A549 (cell line): ENCODE measurements at regions of chr14 and their contacts with region 1.

Region 1: DNA sequence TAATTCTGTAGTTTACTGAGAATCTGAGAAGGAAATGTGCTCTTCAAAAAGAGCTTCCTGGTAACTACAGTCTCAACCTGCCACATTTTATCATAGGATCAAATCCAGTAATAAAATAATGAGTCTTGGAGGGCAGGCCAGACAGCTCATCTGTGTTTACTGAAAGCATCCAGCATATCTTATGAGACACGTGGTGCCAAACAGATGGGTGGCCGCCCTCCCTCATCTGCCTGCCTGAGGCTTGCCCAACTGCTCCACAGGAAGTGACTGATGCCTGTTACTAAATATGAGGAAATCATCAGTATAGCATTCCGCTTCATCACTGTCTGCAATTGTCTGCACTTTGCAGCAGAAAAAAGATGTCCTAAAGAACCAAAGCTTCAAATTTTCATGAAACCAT is 13.5 kb downstream of the DHRS7 start:
- DNase-seq: peak; percentile 51 to 85
- ATAC-seq: peak; percentile 97 to 100
- H3K4me3 ChIP-seq: no peak overlapping the region
- H3K27ac ChIP-seq: peak overlapping the region; percentile 43 to 68; a peak in 5 of 6 replicates
- H3K4me1 ChIP-seq: peaks cover 17% of the 10 kb centered on the region
- CTCF ChIP-seq: no peak
- EP300 ChIP-seq: peak in 1 of 2 experiments; percentile 22; a peak in 1 of 5 replicates
- POLR2A ChIP-seq: no peak
- RAD21 ChIP-seq: no peak

Region 2: DNA sequence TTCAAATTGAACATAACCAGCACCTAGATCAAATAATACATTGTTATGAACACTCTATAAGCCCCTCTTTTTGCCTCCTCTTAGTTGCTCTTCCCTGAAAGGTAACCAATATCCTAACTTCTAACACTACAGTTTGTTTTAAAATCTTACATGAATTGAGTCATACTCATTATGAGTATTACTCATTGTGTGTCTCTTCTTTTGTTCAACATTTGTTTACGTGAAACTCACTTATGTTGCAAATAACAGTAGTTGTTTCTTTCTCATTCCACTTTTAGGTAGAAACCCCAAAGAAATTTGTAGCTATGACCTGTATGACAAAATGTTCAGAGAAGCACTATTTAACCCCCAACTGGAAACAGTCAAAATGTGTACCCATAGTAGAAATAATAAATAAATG is 225.2 kb before region 1 on chr14:
- CTCF ChIA-PET with region 1: no interaction called
- POLR2A ChIA-PET with region 1: no interaction called
- DNase-seq: no peak
- ATAC-seq: no peak
- H3K4me3 ChIP-seq: no peak overlapping the region
- H3K27ac ChIP-seq: no peak overlapping the region
- H3K4me1 ChIP-seq: no peaks in the 10 kb centered on the region
- CTCF ChIP-seq: no peak
- EP300 ChIP-seq: no peak
- POLR2A ChIP-seq: no peak
- RAD21 ChIP-seq: no peak

Region 3: DNA sequence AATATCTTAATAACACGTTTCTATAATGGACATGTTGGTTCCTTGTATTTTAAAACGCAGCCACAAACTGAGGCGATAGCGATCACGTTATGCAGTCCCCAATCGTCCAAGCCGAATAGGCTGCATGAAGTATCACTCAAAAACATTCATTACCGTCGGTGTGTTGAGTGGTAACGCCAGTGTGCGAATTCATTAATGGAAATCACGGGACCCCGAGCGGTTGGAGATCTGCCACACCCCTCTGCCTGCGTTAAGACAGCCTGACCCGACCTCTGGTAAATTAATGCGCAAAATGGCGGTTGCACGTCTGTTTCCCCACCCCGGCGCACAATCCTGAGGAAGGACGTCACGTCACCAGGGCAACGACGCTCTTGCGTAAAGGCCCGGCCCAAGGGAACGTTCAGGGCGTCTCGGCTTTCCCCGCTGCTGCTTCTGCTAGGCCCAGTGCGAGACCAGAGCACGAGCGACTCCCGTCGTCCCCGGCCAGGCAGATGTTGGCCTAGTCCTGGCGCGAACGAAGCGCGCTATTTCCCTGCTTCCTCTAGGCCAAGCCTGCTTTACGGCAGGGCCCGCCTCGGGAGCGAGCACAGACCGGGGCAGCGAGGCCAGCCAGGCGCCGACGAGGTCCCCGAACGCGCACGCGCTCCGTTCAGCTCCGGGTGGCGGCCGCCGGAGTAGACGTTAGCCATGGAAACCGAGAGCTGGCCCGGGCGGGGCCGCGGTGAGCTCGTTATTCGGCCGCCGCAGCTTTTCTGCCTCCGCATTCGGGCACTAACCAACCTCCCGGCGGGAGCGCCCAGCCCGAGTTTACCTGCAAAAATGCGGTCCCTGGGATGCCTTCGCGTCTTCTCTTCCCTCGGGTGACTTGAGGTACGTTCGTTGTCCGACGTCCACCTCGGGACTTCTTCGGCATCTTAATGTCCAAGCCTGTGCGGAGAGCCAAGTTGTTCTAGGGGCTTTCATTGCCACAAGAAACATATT is 59.9 kb before region 1 on chr14 and contains the start of gene PCNX4:
- CTCF ChIA-PET with region 1: interaction called, 7 read pairs
- POLR2A ChIA-PET with region 1: interaction called, 20 read pairs
- DNase-seq: peak; percentile 86 to 99
- ATAC-seq: peak; percentile 96 to 97
- H3K4me3 ChIP-seq: peak within 1 kb of the TSS; percentile 72
- H3K27ac ChIP-seq: peak within 1 kb of the TSS; percentile 92 to 97
- H3K4me1 ChIP-seq: peaks cover 31% of the 10 kb centered on the region
- CTCF ChIP-seq: no peak
- EP300 ChIP-seq: no peak
- POLR2A ChIP-seq: peak; percentile 95
- RAD21 ChIP-seq: no peak
- polyA plus RNA-seq, gene PCNX4: 51.0 and 94.5 TPM in 2 replicates

Region 4: DNA sequence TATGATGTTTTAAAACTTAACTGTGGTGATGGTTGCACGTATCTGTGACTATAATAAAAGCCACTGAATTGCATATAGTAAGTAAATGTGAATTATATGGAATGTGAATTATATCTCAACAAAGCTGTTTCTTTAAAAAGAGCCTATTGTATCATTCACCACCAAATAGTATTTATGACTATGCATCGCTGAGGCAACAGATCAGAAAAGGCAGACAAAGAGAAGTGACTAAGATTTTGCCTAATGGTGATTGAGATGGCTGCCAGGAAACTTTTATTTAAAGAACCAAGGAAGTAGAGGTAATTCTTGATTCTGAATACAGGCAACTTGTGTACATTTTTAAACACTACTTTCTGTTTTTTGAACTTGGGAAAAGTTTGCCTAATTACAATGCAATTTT is 18.2 kb before region 1 on chr14:
- CTCF ChIA-PET with region 1: no interaction called
- POLR2A ChIA-PET with region 1: no interaction called
- DNase-seq: no peak
- ATAC-seq: no peak
- H3K4me3 ChIP-seq: no peak overlapping the region
- H3K27ac ChIP-seq: no peak overlapping the region
- H3K4me1 ChIP-seq: no peaks in the 10 kb centered on the region
- CTCF ChIP-seq: no peak
- EP300 ChIP-seq: no peak
- POLR2A ChIP-seq: no peak
- RAD21 ChIP-seq: no peak

Region 5: GRCh38 chr14:60204104-60204842 is 52.6 kb after region 1 on chr14:
- CTCF ChIA-PET with region 1: no interaction called
- POLR2A ChIA-PET with region 1: no interaction called
- DNase-seq: no peak
- ATAC-seq: no peak
- H3K4me3 ChIP-seq: no peak overlapping the region
- H3K27ac ChIP-seq: no peak overlapping the region
- H3K4me1 ChIP-seq: no peaks in the 10 kb centered on the region
- CTCF ChIP-seq: no peak
- EP300 ChIP-seq: no peak
- POLR2A ChIP-seq: no peak
- RAD21 ChIP-seq: no peak